CD4-positive, alpha-beta memory T cell (primary cell): ENCODE measurements at regions of chr13 and their contacts with region 1.

Region 1: DNA sequence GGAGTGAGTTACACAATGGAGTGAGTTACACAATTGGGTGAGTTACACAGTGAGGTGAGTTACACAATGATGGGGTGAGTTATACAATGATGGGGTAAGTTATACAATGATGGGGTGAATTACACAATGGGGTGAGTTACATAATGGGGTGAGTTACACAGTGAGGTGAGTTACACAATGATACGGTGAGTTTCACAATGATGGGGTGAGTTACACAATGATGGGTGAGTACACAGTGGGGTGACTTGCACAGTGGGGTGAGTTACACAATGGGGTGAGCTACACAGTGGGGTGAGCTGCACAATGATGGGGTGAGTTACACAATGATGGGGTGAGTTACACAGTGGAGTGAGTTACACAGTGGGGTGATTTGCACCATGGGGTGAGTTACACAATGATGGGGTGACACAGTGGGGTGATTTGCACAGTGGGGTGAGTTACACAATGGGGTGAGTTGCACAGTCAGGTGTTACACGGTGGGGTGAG is 52.5 kb upstream of the GAS6 start:
- DNase-seq: no peak
- H3K4me3 ChIP-seq: no peak overlapping the region
- H3K4me3 Mint-ChIP-seq: no peak overlapping the region
- H3K27ac ChIP-seq: no peak overlapping the region
- H3K27ac Mint-ChIP-seq: no peak overlapping the region
- H3K4me1 ChIP-seq: no peaks in the 10 kb centered on the region
- H3K4me1 Mint-ChIP-seq: peaks cover 0 to 2% (median 0%) of the 10 kb centered on the region in 4 donors
- H3K27me3 ChIP-seq: peaks cover 33% of the 10 kb centered on the region
- H3K27me3 Mint-ChIP-seq: peaks cover 35 to 39% of the 10 kb centered on the region in 2 donors

Region 2: GRCh38 chr13:113639616-113640262 is 276.6 kb before region 1 on chr13:
- CTCF ChIA-PET with region 1: no interaction called
- POLR2A ChIA-PET with region 1: no interaction called
- intact Hi-C with region 1: loop called (anchors 5 kb)
- DNase-seq: no peak
- H3K4me3 ChIP-seq: no peak overlapping the region
- H3K4me3 Mint-ChIP-seq: no peak overlapping the region
- H3K27ac ChIP-seq: no peak overlapping the region
- H3K27ac Mint-ChIP-seq: no peak overlapping the region
- H3K4me1 ChIP-seq: no peaks in the 10 kb centered on the region
- H3K4me1 Mint-ChIP-seq: peaks cover 0 to under 1% (median 0%) of the 10 kb centered on the region in 4 donors
- H3K27me3 ChIP-seq: no peaks in the 10 kb centered on the region
- H3K27me3 Mint-ChIP-seq: no peaks in the 10 kb centered on the region

Region 3: DNA sequence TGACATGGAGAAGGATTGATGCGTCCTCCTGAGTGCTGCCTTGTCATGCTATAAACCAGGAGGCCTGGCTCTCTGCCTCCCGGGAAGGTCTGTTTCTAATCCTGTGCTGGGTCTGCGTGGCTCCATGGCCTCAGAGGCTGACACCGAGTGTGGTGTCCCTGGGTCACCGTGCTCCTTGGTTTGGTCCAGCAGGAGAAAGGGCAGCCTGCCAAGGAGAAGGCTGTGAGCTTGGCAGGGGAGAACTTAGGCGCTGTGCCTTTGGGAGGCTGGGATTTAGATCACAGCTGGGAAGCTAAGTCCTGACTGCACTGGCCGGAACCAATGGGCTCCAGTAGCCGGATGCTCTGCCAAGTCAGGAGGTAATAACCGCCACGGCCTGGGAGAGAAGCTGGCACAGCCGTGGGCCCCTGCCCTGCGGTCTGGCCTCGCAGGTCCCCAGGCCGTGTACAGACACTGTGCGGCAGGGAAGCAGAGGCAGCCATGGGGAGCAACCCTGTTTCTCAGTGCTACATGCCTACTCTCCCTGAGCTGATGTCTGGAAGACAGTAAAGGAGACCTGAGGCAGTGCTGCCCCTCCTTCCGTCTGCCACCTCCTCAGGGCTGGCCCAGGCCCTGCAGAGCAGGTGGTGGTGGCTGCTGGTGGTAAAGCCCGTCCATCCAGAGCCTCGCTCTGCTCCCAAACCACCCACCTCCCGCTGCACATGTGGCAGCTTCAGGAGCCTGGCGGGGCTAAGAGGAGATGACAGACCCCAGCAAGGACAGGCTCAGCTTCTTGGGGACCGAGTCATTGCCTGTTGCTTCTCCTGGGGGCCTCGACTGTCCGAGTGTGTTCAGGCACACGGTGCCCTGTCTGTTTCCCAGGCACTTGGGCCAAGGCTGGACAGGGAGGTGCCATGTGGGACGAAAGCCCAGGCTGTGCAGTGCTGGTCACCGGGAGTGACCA is 12.6 kb after region 1 on chr13:
- CTCF ChIA-PET with region 1: no interaction called
- POLR2A ChIA-PET with region 1: no interaction called
- intact Hi-C with region 1: no loop called
- DNase-seq: no peak
- H3K4me3 ChIP-seq: no peak overlapping the region
- H3K4me3 Mint-ChIP-seq: no peak overlapping the region
- H3K27ac ChIP-seq: no peak overlapping the region
- H3K27ac Mint-ChIP-seq: peak overlapping the region in 1 of 7 donors; percentile 72
- H3K4me1 ChIP-seq: peaks cover 10% of the 10 kb centered on the region
- H3K4me1 Mint-ChIP-seq: peaks cover 2 to 8% (median 7%) of the 10 kb centered on the region in 4 donors
- H3K27me3 ChIP-seq: no peaks in the 10 kb centered on the region
- H3K27me3 Mint-ChIP-seq: peaks cover 4 to 8% of the 10 kb centered on the region in 2 donors